Endothelial cell of umbilical vein (primary cell): ENCODE measurements at regions of chr6 and their contacts with region 1.

Region 1: DNA sequence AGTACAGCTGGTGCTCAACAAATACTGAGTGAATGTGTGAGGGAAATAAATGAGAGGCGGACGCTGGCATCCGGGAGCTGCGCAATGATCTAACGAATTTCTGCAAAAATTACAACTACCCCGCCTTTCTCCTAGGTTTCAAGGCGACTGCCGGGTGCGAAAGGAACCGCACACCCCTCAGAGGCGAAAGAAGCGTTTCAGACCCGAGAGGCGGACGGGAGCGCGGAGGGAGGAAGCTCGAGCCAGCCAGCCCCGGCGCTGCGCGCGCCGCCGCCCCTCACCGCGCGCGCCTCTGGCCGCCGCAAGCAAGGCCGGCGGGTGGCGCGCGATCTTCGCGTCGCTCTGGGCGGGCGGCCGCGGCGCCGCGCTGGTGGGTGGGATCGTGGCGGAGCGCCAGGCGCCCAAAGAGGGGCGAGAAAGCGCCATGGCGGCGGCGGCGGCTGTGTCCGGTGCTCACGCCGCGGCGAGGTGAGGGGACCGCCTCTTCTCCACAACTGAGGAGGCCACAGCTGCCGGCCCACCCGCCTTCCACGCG is at the start of gene BLTP3A:
- DNase-seq: peak; percentile 69
- H3K4me3 ChIP-seq: peak within 1 kb of the TSS; percentile 77 to 97 (median 82)
- H3K27ac ChIP-seq: peak within 1 kb of the TSS; percentile 48
- H3K4me1 ChIP-seq: peaks cover 21% of the 10 kb centered on the region
- H3K27me3 ChIP-seq: no peaks in the 10 kb centered on the region
- CTCF ChIP-seq: peak in 1 of 2 donors; percentile 6
- POLR2A ChIP-seq: peak; percentile 78
- total RNA-seq, gene BLTP3A: 9.3 and 10.5 TPM in 2 replicates

Region 2: GRCh38 chr6:34810936-34811632 is 19.3 kb after region 1 on chr6:
- CTCF ChIA-PET with region 1: interaction called, 12 read pairs
- POLR2A ChIA-PET with region 1: no interaction called
- dilution Hi-C with region 1: no loop called
- intact Hi-C with region 1: no loop called
- DNase-seq: peak; percentile 26
- H3K4me3 ChIP-seq: no peak overlapping the region
- H3K27ac ChIP-seq: no peak overlapping the region
- H3K4me1 ChIP-seq: peaks cover 20% of the 10 kb centered on the region
- H3K27me3 ChIP-seq: no peaks in the 10 kb centered on the region
- CTCF ChIP-seq: no peak
- POLR2A ChIP-seq: no peak

Region 3: GRCh38 chr6:34867484-34867883 is 75.7 kb after region 1 on chr6:
- CTCF ChIA-PET with region 1: interaction called, 8 read pairs
- POLR2A ChIA-PET with region 1: no interaction called
- dilution Hi-C with region 1: no loop called
- intact Hi-C with region 1: loop called (anchors 1 kb)
- DNase-seq: no peak
- H3K4me3 ChIP-seq: no peak overlapping the region
- H3K27ac ChIP-seq: no peak overlapping the region
- H3K4me1 ChIP-seq: peaks cover 22% of the 10 kb centered on the region
- H3K27me3 ChIP-seq: no peaks in the 10 kb centered on the region
- CTCF ChIP-seq: no peak
- POLR2A ChIP-seq: no peak

Region 4: DNA sequence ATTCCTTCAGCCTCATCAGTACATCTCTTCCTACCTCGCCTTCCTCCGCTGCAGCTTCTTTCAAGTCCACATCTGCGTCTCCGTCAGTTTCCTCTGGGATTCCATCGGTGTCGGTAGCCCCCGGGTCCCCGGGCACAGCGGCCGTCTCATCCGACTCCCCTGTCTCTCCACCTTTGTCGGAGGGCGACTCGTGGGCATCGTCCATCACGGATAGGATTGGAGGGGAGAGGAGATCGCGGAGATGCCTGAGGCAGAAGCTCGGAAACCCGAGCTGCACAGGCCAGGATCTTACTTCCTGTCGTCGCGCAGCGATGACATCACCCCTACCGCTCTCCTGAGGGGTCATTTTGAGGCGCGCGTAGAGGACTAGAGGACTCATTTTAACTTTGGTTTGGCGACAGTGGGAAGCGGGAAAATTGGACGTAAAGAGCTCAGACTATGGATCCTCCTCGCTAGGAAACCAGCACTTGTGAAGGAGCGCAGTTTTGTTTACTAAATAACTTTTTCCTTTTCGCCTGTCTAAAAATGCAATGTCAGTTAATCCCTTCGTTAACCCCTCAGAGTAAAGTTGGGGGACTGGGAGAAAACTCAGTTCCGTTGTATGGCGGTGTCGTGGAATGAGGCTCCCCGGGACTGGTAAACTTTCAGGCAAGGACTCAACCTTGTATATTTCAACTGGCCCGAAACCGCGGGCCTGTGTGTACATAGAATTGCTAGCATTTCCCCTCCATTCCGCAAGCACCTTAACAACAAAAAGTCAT is 96.2 kb after region 1 on chr6 and contains the start of gene TAF11:
- CTCF ChIA-PET with region 1: interaction called, 14 read pairs
- POLR2A ChIA-PET with region 1: interaction called, 3 read pairs
- dilution Hi-C with region 1: no loop called
- intact Hi-C with region 1: loop called (anchors 1 kb)
- DNase-seq: peak; percentile 93
- H3K4me3 ChIP-seq: peak within 1 kb of the TSS; percentile 80 to 96 (median 87)
- H3K27ac ChIP-seq: peak within 1 kb of the TSS; percentile 82
- H3K4me1 ChIP-seq: peaks cover 14% of the 10 kb centered on the region
- H3K27me3 ChIP-seq: no peaks in the 10 kb centered on the region
- CTCF ChIP-seq: no peak
- POLR2A ChIP-seq: peak; percentile 83
- total RNA-seq, gene TAF11: 37.1 and 41.0 TPM in 2 replicates

Region 5: GRCh38 chr6:35052694-35053565 is 261.2 kb after region 1 on chr6:
- CTCF ChIA-PET with region 1: no interaction called
- POLR2A ChIA-PET with region 1: no interaction called
- dilution Hi-C with region 1: no loop called
- intact Hi-C with region 1: no loop called
- DNase-seq: peak; percentile 39
- H3K4me3 ChIP-seq: no peak overlapping the region
- H3K27ac ChIP-seq: no peak overlapping the region
- H3K4me1 ChIP-seq: peaks cover 8% of the 10 kb centered on the region
- H3K27me3 ChIP-seq: no peaks in the 10 kb centered on the region
- CTCF ChIP-seq: no peak
- POLR2A ChIP-seq: no peak